OCI-LY7 (cell line): ENCODE measurements at regions of chr4 and their contacts with region 1.

Region 1: DNA sequence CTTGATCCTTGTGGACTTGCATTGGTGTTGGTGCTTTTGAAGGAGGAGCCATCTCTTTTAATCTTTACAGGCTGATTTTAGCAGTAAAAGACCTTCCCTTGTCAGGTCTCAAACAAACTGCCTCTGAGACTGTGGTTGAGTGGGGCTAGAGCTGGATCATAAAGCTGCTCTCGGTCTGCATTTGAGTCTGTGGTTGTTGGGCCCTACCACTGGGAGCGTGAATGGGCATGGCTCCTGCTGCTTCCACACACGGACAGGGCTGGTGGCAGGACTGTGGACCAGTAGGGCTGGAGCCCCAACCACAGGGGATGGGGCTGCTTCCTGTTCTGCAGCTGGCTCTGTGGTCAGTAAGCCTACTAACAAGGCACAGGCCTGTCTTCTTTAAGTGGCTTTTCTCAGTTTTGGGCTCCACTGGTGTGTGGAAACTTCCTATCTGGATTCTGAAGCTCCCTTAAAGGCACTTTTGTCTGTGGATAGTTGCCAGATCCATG is 130.6 kb downstream of the RBM46 start:
- DNase-seq: no peak
- H3K4me3 ChIP-seq: no peak overlapping the region
- H3K27ac ChIP-seq: no peak overlapping the region
- H3K4me1 ChIP-seq: no peaks in the 10 kb centered on the region
- CTCF ChIP-seq: no peak

Region 2: DNA sequence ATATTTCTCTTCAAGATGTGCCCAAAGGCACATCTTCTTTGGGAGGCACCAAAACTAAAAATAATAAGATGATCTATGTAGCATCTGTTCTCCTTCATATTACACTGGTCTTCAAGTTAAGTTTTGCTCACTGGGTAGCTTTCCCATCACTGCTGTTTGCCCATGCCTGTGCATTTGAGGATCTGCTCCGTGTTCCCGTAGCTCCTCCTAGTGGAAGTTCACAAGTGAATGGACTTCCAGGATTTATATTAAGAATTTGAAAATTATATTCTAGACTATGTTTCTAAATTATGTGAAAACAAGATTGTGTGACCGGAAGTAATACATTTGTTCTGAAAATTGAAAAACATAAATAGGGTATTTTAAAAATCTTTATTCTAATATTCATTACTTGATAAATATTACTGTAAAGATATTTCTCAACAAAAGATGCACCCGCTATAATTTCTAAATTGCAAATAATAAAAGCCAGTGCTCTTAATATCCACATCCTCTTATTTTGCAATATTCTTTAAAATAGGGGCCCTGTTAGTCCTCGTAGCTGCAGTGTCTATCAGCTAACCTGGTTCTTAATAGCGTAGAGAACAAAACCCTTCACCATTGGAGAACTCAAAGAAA is 17.1 kb after region 1 on chr4:
- CTCF ChIA-PET with region 1: no interaction called
- POLR2A ChIA-PET with region 1: no interaction called
- intact Hi-C with region 1: no loop called
- DNase-seq: no peak
- H3K4me3 ChIP-seq: no peak overlapping the region
- H3K27ac ChIP-seq: no peak overlapping the region
- H3K4me1 ChIP-seq: no peaks in the 10 kb centered on the region
- CTCF ChIP-seq: 0 out of 2 replicates have a peak, but pooled peaks have one; percentile 16

Region 3: DNA sequence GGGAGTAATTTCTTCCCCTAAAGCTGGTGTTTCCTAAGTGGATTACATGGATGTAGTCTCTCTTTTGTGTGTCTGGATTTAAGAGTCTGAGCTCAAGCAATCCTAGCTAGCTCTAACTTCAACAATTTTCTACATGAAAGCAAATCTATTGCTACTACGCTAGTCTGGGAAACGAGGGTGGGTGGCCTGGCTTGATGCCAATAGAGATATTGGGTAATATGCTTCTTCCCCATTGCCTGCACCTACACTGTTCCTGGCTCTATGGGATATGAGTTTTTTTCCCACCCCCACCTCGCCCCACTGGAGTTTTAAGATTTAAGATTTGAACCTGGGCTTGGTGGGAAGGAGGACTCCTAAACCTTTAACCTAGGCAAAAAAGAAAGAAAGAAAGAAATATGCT is 28.2 kb after region 1 on chr4:
- CTCF ChIA-PET with region 1: no interaction called
- POLR2A ChIA-PET with region 1: no interaction called
- intact Hi-C with region 1: loop called (anchors 2 kb)
- DNase-seq: no peak
- H3K4me3 ChIP-seq: no peak overlapping the region
- H3K27ac ChIP-seq: no peak overlapping the region
- H3K4me1 ChIP-seq: no peaks in the 10 kb centered on the region
- CTCF ChIP-seq: no peak